Upper lobe of right lung (tissue), 1 donor: ENCODE measurements at regions of chr12 and their contacts with region 1.

Region 1: GRCh38 chr12:1795785-1796514 is 24.4 kb upstream of the LRTM2 start:
- DNase-seq: peak; percentile 97
- ATAC-seq: peak; percentile 94
- H3K4me3 ChIP-seq: peak overlapping the region; percentile 85
- H3K27ac ChIP-seq: peak overlapping the region; percentile 93
- H3K4me1 ChIP-seq: peaks cover 11% of the 10 kb centered on the region
- H3K27me3 ChIP-seq: no peaks in the 10 kb centered on the region
- CTCF ChIP-seq: peak; percentile 97

Region 2: DNA sequence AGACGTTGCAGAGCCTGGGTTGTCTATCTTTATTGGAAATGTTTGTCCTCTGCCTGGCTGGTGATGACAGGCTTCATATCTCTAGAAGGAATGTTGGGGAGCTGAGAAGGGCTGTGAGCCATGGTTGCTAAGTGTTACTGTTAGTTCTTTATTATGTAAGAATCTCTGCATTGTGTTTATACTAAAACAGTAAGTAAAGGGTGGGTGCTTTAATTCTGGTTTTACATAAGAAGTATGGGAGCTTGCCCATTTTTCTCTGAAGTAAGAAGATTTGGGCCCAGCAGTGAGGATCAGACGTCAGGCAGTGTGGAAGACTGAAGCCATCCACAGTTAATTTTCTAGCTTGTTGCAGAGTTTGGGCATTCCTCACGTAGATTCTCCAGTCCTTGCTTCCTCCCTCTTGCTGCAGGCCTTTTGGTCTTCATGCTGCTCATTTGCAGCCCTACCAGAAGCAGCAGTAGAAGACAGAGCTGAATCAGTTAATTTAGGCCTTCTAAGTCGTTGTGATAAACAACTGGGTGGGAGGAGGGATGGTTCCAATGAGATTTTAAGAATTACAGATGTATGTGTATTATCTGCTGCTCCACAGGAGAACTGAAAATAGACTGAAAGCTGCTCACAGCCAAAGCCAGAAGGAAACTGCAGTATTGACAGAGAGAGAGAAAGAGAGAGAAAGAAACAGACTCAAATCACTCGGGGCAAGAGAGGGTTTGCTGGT is 145.5 kb before region 1 on chr12:
- intact Hi-C with region 1: loop called (anchors 5 kb)
- DNase-seq: no peak
- ATAC-seq: no peak
- H3K4me3 ChIP-seq: no peak overlapping the region
- H3K27ac ChIP-seq: peak overlapping the region; percentile 30
- H3K4me1 ChIP-seq: no peaks in the 10 kb centered on the region
- H3K27me3 ChIP-seq: no peaks in the 10 kb centered on the region
- CTCF ChIP-seq: no peak